ENCODE measurements at regions of chr14 and their contacts with region 1.

Region 1: DNA sequence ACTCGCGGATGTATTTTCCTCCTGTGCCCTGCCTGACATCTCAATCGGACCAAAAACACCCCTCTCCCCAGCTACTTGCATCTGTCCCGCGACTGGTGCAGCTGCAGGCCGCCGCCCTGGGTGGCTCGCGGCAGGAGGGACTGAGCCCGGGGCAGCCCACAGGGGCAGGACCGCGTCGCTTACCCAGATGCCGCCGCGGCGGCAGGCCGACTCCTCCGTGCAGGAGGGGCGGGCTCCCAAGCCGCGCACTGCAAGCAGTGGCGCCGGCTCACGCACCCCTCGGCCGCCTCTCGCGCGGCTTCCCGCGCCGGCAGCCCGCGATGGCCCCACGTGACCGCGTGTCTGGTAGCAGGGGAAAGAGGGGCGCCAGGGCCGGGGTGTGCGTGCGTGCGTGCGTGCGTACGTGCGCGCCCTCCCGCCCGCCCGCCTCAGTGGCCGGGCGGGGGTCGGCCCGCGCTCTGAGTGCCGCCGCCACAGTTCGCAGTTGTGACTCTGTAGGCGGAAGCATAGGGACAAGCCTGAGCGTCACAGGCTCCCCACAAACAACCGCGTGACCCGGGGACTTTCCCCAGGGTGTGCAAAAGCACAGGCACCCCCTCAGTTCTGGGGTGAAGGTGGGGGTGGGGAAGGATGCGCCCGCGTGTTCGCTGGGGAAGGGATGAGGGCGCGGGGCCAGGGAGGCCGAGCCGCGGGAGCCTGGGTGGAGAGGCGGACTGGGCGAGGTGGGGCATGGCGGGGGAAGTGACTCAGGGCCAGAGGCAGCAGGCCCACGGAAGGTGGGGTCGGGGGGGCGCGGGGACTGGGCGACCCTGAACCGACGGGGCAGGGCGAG is at the start of gene ZBTB25:
- DNase-seq: peak; percentile 91
- ATAC-seq: peak; percentile 66
- H3K4me3 Mint-ChIP-seq: peak within 1 kb of the TSS; percentile 97
- H3K27ac Mint-ChIP-seq: peak within 1 kb of the TSS; percentile 100
- H3K4me1 Mint-ChIP-seq: peaks cover 73% of the 10 kb centered on the region
- H3K27me3 Mint-ChIP-seq: no peaks in the 10 kb centered on the region
- CTCF ChIP-seq: no peak
- total RNA-seq, gene ZBTB25: 20.9 and 29.1 TPM in 2 replicates

Region 2: GRCh38 chr14:63641473-63642228 is 862.0 kb before region 1 on chr14 and contains the start of gene WDR89:
- CTCF ChIA-PET with region 1: no interaction called
- POLR2A ChIA-PET with region 1: interaction called, 8 read pairs
- intact Hi-C with region 1: loop called (anchors 1 kb)
- DNase-seq: peak; percentile 84
- ATAC-seq: peak; percentile 83
- H3K4me3 Mint-ChIP-seq: peak within 1 kb of the TSS; percentile 92
- H3K27ac Mint-ChIP-seq: peak within 1 kb of the TSS; percentile 98
- H3K4me1 Mint-ChIP-seq: peaks cover 34% of the 10 kb centered on the region
- H3K27me3 Mint-ChIP-seq: no peaks in the 10 kb centered on the region
- CTCF ChIP-seq: no peak
- total RNA-seq, gene WDR89: 21.9 and 24.4 TPM in 2 replicates

Region 3: GRCh38 chr14:63852817-63853731 is 650.6 kb before region 1 on chr14 and contains the start of gene SYNE2:
- CTCF ChIA-PET with region 1: no interaction called
- POLR2A ChIA-PET with region 1: no interaction called
- intact Hi-C with region 1: loop called (anchors 10 kb)
- DNase-seq: peak; percentile 83
- ATAC-seq: peak; percentile 91
- H3K4me3 Mint-ChIP-seq: peak within 1 kb of the TSS; percentile 92
- H3K27ac Mint-ChIP-seq: peak within 1 kb of the TSS; percentile 87
- H3K4me1 Mint-ChIP-seq: peaks cover 24% of the 10 kb centered on the region
- H3K27me3 Mint-ChIP-seq: no peaks in the 10 kb centered on the region
- CTCF ChIP-seq: no peak
- total RNA-seq, gene SYNE2: 35.0 and 40.1 TPM in 2 replicates

Region 4: DNA sequence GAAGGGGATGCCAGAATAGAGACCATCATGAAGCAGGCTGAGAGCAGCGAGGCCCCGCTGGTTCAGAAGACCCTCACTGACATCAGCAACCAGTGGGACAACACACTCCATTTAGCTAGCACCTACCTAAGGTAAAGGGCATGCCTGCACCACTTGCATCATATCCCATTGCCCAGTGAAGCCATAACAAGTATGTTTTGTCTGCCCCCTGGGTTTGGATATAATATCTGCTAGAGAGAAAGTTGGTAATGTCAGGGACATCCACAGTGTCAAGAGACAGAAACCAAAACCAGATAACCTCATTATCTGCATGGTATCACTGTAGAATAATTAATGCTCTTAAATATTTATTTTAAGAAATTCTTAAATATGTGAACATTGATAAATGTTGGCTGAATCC is 477.1 kb before region 1 on chr14:
- CTCF ChIA-PET with region 1: no interaction called
- POLR2A ChIA-PET with region 1: no interaction called
- intact Hi-C with region 1: no loop called
- DNase-seq: no peak
- ATAC-seq: no peak
- H3K4me3 Mint-ChIP-seq: no peak overlapping the region
- H3K27ac Mint-ChIP-seq: no peak overlapping the region
- H3K4me1 Mint-ChIP-seq: no peaks in the 10 kb centered on the region
- H3K27me3 Mint-ChIP-seq: no peaks in the 10 kb centered on the region
- CTCF ChIP-seq: no peak

Region 5: DNA sequence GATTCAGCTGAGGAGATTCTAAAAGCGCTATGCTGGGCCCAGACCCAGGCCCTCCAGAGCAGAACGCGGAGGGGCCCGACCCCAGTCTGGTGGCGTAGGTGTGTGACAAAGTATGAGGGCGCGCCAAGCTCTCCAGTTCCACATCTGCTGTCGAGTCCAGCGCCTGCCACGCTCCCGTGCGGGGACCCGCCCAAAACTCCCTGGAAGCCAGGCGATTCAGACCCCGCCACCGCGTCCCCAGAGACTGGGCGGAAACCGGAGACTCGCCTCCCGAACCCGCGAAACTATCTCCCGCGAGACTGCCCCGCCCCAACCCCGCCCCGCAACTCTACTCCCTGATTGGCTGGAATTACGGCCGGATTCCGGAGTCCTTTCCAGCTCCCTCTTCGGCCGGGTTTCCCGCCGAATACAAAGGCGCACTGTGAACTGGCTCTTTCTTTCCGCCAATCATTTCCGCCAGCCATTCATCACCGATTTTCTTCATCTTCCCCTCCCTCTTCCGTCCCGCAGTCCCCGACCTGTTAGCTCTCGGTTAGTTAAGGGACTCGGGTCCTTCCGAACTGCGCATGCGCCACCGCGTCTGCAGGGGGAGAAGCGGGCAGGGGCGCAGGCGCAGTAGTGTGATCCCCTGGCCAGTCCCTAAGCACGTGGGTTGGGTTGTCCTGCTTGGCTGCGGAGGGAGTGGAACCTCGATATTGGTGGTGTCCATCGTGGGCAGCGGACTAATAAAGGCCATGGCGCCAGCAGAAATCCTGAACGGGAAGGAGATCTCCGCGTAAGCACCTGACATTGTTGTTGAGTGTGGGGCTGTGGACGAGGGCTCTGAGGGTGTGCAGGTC is 115.8 kb before region 1 on chr14 and contains the start of gene MTHFD1:
- CTCF ChIA-PET with region 1: no interaction called
- POLR2A ChIA-PET with region 1: interaction called, 60 read pairs
- intact Hi-C with region 1: loop called (anchors 1 kb)
- DNase-seq: peak; percentile 93
- ATAC-seq: peak; percentile 79
- H3K4me3 Mint-ChIP-seq: peak within 1 kb of the TSS; percentile 94
- H3K27ac Mint-ChIP-seq: peak within 1 kb of the TSS; percentile 94
- H3K4me1 Mint-ChIP-seq: peaks cover 52% of the 10 kb centered on the region
- H3K27me3 Mint-ChIP-seq: no peaks in the 10 kb centered on the region
- CTCF ChIP-seq: no peak
- total RNA-seq, gene MTHFD1: 91.4 and 98.4 TPM in 2 replicates

Region 6: DNA sequence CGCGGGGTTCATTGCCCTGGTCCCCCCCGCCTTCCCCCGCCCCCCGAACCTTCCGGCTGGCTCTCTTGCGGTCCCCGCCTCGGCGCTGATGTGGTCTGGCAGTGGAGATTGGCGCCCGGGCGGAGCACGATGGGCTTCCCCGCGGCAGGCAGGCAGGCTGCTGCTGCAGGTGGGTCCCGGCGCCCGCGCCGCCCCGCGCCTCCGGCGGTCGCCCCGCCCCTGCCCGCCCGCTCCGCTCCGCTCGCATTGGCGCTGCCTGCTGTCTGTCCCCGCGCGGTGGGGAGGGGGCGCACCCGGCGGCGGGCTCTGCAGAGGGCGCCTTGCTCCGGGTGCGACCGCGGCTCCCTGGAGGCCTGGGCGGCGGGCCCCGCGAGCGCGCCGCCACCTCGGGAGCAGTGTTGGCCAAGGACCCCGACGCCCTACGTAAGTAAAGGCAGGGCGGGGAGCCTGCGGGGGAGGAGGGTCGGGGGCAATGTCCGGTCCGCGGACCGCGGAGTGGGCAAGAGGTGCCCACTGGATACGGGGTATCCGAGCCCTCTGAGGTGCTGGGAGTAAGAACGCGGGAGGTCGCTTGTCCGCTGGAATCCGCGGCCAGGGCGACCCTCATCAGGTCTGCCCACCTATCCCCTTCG is 38.4 kb before region 1 on chr14 and contains the start of gene AKAP5:
- CTCF ChIA-PET with region 1: interaction called, 3 read pairs
- POLR2A ChIA-PET with region 1: interaction called, 17 read pairs
- intact Hi-C with region 1: loop called (anchors 1 kb)
- DNase-seq: peak; percentile 67
- ATAC-seq: peak; percentile 91
- H3K4me3 Mint-ChIP-seq: peak within 1 kb of the TSS; percentile 86
- H3K27ac Mint-ChIP-seq: peak within 1 kb of the TSS; percentile 80
- H3K4me1 Mint-ChIP-seq: peaks cover 51% of the 10 kb centered on the region
- H3K27me3 Mint-ChIP-seq: no peaks in the 10 kb centered on the region
- CTCF ChIP-seq: no peak
- total RNA-seq, gene AKAP5: 4.3 and 5.1 TPM in 2 replicates

Region 7: GRCh38 chr14:64540208-64541157 is 36.8 kb after region 1 on chr14 and contains the start of gene HSPA2:
- CTCF ChIA-PET with region 1: interaction called, 3 read pairs
- POLR2A ChIA-PET with region 1: interaction called, 55 read pairs
- intact Hi-C with region 1: loop called (anchors 1 kb)
- DNase-seq: peak; percentile 93
- ATAC-seq: peak; percentile 90
- H3K4me3 Mint-ChIP-seq: peak within 1 kb of the TSS; percentile 100
- H3K27ac Mint-ChIP-seq: peak within 1 kb of the TSS; percentile 96
- H3K4me1 Mint-ChIP-seq: peaks cover 33% of the 10 kb centered on the region
- H3K27me3 Mint-ChIP-seq: peaks cover 2% of the 10 kb centered on the region
- CTCF ChIP-seq: no peak
- total RNA-seq, gene HSPA2: 3.8 and 5.4 TPM in 2 replicates

Region 8: DNA sequence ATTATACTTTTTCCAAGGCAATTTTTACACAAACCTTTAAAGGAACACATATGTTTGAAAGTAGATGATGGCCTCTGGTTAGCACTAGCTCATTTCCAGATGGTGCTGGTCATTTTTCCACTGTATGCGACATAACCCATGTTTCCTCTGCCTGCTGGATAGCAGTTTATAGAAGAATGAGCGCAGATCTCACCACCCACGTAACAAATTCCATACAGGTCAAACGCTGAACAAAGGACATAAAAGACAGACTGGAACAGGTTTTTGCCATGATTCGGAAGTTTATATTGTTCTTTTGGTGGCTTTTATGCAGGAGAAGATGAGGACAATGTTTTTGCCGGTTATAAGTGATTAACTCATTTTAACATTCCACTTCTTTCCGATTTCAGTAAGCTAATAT is 76.8 kb after region 1 on chr14:
- CTCF ChIA-PET with region 1: no interaction called
- POLR2A ChIA-PET with region 1: no interaction called
- intact Hi-C with region 1: no loop called
- DNase-seq: no peak
- ATAC-seq: no peak
- H3K4me3 Mint-ChIP-seq: no peak overlapping the region
- H3K27ac Mint-ChIP-seq: no peak overlapping the region
- H3K4me1 Mint-ChIP-seq: no peaks in the 10 kb centered on the region
- H3K27me3 Mint-ChIP-seq: no peaks in the 10 kb centered on the region
- CTCF ChIP-seq: no peak

Region 9: GRCh38 chr14:65070455-65070976 is 566.8 kb after region 1 on chr14:
- CTCF ChIA-PET with region 1: no interaction called
- POLR2A ChIA-PET with region 1: no interaction called
- intact Hi-C with region 1: no loop called
- DNase-seq: no peak
- ATAC-seq: peak; percentile 40
- H3K4me3 Mint-ChIP-seq: peak overlapping the region; percentile 11
- H3K27ac Mint-ChIP-seq: no peak overlapping the region
- H3K4me1 Mint-ChIP-seq: peaks cover 26% of the 10 kb centered on the region
- H3K27me3 Mint-ChIP-seq: no peaks in the 10 kb centered on the region
- CTCF ChIP-seq: no peak